ENCODE measurements at regions of chr11 and their contacts with region 1.

Region 1: DNA sequence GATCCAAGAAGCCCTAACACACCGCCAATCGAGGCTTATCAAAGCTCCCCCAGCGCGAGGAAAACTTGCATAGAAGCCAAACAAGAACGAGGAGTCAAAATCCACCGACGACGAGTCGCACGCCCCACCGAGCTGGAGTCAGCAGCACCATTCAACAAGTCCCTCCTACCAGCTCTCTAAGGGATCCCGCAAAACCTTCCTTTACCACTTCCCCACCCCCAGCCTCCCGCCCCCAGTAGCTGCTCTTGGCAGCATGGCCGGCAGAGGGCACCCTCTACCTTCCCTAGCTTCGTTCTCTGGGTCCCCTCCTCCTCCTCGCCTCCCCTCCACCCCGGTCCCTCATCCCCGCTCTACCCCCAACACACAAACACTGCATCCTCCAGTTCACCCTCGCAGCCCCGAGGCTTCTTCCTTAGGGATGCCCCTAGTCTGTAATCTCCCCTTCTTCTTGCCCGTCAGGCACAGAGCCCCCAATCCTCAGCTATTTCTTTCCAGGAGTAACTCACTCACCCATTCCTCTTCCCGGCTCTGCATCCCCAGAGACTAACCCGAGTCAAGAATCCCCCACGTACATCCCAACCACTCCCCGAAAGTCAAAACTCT is 1.3 kb downstream of the BDNF start:
- DNase-seq: peak; percentile 86
- H3K4me3 ChIP-seq: peak overlapping the region; percentile 85
- CTCF ChIP-seq: peak; percentile 73

Region 2: GRCh38 chr11:27656806-27657483 is 42.0 kb before region 1 on chr11:
- in situ Hi-C with region 1: no loop called
- DNase-seq: no peak
- H3K4me3 ChIP-seq: no peak overlapping the region
- CTCF ChIP-seq: no peak

Region 3: GRCh38 chr11:29321293-29322132 is 1622.5 kb after region 1 on chr11:
- in situ Hi-C with region 1: loop called (anchors 5 kb)
- DNase-seq: no peak
- H3K4me3 ChIP-seq: no peak overlapping the region
- CTCF ChIP-seq: no peak

Measured in astrocyte of the cerebellum (primary cell).